Activated CD4-positive, alpha-beta T cell treated with anti-CD3 and anti-CD28 coated beads for 36 hours (primary cell): ENCODE measurements at regions of chr9 and their contacts with region 1.

Region 1: GRCh38 chr9:26606756-26607155 is 285.8 kb downstream of the CAAP1 start:
- DNase-seq: no peak
- ATAC-seq: no peak
- H3K4me3 Mint-ChIP-seq: no peak overlapping the region
- H3K27ac Mint-ChIP-seq: no peak overlapping the region
- H3K4me1 Mint-ChIP-seq: no peaks in the 10 kb centered on the region
- H3K27me3 Mint-ChIP-seq: no peaks in the 10 kb centered on the region

Region 2: DNA sequence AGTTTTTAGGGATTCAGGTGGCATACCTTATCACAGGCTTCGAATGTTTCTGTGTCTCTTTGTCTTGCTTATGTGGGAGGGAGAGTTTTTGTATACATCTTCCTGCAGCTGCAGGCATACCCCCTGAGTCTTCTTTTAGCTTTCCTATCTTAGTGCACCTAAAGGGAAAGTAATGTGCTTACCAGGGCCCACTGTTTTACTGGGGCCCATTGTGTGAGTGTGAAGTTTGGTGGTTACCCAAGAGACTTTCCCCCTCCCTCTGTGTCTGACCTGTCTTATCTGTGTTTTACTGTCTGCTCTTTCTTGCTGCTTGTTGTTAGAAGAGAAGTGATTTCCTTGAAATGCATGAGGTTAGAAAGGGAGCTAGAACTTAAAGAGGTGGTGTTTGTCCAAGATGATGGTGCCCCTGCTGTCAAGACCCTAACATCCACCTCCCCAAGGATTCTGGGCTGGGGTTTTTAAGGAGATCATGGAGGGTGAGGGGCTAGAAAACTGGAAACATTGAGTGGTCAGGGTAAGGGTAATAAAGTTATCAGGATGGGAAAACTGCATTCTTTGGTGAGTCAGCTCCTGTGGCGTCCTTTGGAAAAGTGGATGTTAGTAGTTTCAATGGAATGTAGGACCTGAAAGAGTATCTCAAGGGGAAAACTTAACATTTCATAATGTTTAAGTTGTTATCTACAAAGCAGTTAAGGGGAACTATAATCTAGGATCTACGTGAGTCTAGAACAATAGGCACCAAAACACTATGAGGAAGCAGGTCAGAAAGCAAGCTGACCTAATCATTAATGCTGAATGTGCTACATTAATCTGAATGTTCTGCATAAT is 345.0 kb before region 1 on chr9:
- CTCF ChIA-PET with region 1: no interaction called
- POLR2A ChIA-PET with region 1: no interaction called
- intact Hi-C with region 1: no loop called
- DNase-seq: no peak
- ATAC-seq: no peak
- H3K4me3 Mint-ChIP-seq: no peak overlapping the region
- H3K27ac Mint-ChIP-seq: no peak overlapping the region
- H3K4me1 Mint-ChIP-seq: no peaks in the 10 kb centered on the region
- H3K27me3 Mint-ChIP-seq: no peaks in the 10 kb centered on the region

Region 3: GRCh38 chr9:26579056-26579455 is 27.7 kb before region 1 on chr9:
- CTCF ChIA-PET with region 1: no interaction called
- POLR2A ChIA-PET with region 1: no interaction called
- intact Hi-C with region 1: loop called in 1 of 2 experiments (anchors 2 kb)
- DNase-seq: no peak
- ATAC-seq: no peak
- H3K4me3 Mint-ChIP-seq: no peak overlapping the region
- H3K27ac Mint-ChIP-seq: no peak overlapping the region
- H3K4me1 Mint-ChIP-seq: no peaks in the 10 kb centered on the region
- H3K27me3 Mint-ChIP-seq: no peaks in the 10 kb centered on the region

Region 4: GRCh38 chr9:26677965-26678706 is 71.4 kb after region 1 on chr9:
- CTCF ChIA-PET with region 1: no interaction called
- POLR2A ChIA-PET with region 1: no interaction called
- intact Hi-C with region 1: no loop called
- DNase-seq: no peak
- ATAC-seq: no peak
- H3K4me3 Mint-ChIP-seq: no peak overlapping the region
- H3K27ac Mint-ChIP-seq: no peak overlapping the region
- H3K4me1 Mint-ChIP-seq: no peaks in the 10 kb centered on the region
- H3K27me3 Mint-ChIP-seq: peaks cover 3% of the 10 kb centered on the region

Region 5: GRCh38 chr9:26735160-26735559 is 128.4 kb after region 1 on chr9:
- CTCF ChIA-PET with region 1: no interaction called
- POLR2A ChIA-PET with region 1: no interaction called
- intact Hi-C with region 1: no loop called
- DNase-seq: no peak
- ATAC-seq: no peak
- H3K4me3 Mint-ChIP-seq: no peak overlapping the region
- H3K27ac Mint-ChIP-seq: no peak overlapping the region
- H3K4me1 Mint-ChIP-seq: no peaks in the 10 kb centered on the region
- H3K27me3 Mint-ChIP-seq: peaks cover 16% of the 10 kb centered on the region

Region 6: DNA sequence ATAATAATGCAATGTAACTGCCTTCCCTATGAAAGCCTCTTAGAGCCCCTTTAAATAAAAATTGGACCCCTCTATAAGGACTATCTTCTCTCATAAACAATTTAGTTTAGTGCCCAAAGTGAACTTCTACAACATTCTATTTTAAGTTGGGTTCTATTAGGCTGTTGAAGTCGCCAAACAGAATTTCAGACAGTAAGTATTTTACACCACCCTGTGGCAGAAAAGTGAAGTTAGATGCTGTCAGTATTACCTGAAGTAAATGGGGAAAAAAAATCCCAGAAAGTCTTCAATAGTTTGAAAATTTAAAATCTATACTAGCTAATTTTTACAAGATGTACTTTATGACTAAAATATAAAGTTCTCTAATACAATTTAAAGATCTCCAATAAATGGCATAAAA is 256.3 kb after region 1 on chr9:
- CTCF ChIA-PET with region 1: no interaction called
- POLR2A ChIA-PET with region 1: no interaction called
- intact Hi-C with region 1: no loop called
- DNase-seq: no peak
- ATAC-seq: no peak
- H3K4me3 Mint-ChIP-seq: no peak overlapping the region
- H3K27ac Mint-ChIP-seq: no peak overlapping the region
- H3K4me1 Mint-ChIP-seq: no peaks in the 10 kb centered on the region
- H3K27me3 Mint-ChIP-seq: no peaks in the 10 kb centered on the region